ENCODE measurements at regions of chr14 and their contacts with region 1.

Region 1: DNA sequence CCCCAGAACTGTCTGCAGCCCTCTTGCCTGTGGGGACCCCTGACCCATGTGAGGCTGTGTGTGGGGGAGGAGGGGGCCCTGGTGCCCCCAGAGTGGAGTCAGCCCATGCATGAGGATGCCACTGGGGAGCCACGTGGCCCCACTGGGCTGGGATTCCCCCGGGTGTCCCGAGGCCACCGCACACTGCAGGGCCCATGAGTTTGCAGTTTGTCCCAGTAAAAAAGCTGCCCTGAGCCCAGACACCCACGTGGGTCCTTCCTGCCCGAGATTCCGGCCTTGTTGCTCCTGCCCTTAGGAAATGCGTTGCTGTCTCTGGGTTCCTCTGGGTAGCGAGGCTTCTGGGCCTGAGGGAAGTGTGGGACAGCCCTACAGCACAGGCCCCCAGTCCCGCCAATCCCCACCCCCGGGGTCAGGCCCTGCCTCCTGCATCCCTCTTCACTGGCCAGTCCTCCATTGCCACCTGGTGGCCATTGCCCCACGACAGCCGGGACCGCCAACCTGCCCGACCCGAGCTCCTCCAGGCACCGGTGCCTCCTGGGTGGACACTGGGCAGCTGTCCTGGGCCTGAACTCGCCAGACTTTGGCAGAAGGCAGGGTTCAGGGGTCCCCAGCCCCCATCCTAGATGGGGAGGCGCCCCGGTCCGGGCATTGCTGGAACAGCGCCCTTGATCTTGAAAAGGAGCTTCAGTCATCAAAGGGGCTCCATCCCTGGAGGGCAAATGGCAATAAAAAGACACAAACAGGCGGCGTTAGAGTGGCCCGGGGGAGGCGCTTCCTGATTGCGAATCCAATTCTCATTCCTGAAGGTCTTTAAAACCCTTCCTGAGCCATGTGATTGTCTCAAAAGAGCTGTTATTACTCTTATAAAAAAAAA is 15.6 kb upstream of the C14orf180 start:
- DNase-seq: peak; percentile 87
- CTCF ChIP-seq: peak; percentile 75

Region 2: GRCh38 chr14:104094709-104095438 is 469.1 kb before region 1 on chr14:
- CTCF ChIA-PET with region 1: interaction called, 10 read pairs
- POLR2A ChIA-PET with region 1: no interaction called
- DNase-seq: peak; percentile 86
- CTCF ChIP-seq: peak; percentile 87

Region 3: DNA sequence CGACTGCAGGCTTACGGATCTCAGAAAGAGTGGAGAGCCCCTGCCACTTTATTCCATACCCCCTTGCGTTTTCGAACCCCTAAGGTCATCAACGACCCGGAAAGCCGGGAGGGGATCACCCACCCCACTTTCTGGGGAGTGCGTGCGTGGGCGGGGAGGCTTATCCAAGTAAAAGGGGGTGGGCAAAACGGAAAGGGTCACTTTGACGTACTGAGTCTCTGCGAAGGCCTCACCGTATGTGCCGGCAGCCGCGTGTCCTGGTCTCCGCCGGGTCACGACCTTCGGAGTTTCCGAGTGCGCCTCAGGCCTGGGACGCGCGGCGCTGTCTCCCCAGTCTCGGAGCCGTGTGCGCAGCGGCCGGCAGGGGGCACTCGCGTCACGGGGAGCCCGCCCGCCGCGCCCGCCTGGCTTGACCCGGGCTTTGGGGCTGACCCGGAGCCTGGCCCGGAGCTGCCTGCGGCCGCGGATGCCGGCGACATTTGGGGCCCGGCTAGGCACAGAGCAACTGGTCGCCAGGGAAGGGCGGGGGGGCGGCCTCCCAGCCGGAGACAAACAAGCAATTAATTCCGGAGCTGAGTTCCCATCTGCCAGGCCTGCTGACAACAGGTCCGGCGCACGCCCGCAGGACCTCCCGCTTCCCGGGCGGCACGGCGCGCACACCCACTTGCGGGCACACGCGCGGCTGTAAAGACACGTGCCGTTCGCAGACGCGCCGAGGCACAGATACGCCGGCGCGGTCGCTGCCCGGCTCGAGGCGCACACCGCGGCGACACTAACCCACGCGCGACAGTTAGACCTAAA is 426.5 kb before region 1 on chr14:
- CTCF ChIA-PET with region 1: interaction called, 12 read pairs
- POLR2A ChIA-PET with region 1: no interaction called
- DNase-seq: peak; percentile 87
- CTCF ChIP-seq: peak; percentile 86

Region 4: DNA sequence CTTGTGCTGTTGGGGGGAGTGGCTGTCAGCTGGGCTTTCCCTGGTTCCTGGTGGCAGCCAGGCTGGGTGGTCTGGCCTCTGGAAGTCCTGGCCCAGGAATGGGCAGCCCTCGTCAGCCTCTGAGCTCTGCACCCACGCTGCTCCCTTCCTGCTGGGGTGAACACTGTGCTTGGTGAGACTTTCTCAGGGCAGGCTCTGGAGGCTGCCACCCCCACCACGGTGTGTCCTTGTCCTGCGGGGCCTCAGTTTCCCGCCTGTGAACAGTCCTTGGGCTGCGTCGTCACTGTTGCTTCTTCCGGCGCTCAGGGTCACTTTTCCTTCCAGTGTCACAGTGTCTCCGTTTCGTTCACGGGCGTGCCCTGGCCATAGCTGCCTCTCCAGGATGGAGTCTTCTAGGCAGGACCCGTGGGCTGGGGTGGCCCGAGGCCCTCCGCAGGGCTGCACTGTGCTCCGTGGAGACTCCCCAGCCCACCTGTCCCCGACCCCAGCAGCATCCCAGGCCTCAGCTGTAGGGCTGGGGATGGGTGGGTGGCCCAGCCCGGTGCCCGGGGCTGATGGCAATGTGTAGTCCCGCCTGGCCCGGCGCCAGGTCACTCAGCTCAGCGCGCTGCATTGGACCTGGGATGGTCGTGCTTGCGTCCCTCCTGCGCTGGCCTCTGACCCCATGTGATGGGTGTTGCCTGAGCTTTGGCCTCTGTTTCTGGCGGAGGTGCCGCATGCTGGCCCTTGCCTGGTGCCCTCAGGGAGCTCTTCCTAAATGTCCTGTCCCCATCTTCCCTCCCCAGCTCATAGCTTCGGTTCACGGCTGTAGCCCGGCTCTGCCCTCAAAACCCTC is 418.9 kb before region 1 on chr14:
- CTCF ChIA-PET with region 1: interaction called, 11 read pairs
- POLR2A ChIA-PET with region 1: no interaction called
- DNase-seq: no peak
- CTCF ChIP-seq: no peak

Region 5: GRCh38 chr14:104510794-104511611 is 53.0 kb before region 1 on chr14:
- CTCF ChIA-PET with region 1: no interaction called
- POLR2A ChIA-PET with region 1: no interaction called
- DNase-seq: no peak
- CTCF ChIP-seq: no peak

Measured in GM10248 (cell line).